ENCODE measurements at regions of chr6 and their contacts with region 1.

Region 1: DNA sequence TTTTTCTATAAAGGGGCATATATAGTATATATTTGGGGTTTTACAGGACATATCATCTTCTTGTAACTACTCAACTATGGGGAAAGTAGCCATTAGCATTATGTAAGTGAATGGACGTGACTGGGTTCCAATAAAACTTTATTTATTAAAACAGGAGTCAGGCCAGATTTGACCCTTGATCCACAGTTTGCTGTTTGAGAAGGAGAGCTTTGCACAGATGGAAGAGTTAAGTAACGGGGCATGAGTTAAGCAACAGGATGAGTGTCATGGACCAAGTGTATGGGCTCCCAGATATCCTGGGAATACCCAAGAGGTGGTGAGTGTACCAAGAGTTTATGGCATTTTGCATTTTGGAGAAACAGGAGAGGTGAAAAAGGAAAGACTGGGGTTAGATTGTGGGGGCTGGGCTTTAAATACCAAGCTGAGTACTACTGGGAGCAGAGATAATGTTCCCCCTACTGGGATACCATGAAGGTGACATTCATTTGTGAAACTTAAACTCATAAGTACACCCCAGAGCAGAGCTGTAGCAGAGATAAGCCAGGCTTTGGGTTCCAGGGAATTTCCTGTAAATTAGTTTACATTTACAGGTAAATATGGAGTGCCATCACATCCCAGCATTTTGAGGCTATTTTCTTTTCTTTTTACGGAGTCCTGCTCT is 18.5 kb upstream of the SCUBE3 start:
- DNase-seq: no peak
- H3K4me3 ChIP-seq: no peak overlapping the region
- H3K27ac ChIP-seq: no peak overlapping the region
- H3K4me1 ChIP-seq: peaks cover 0 to 10% (median 2%) of the 10 kb centered on the region in 4 experiments; a peak in 3 of 7 replicates
- H3K27me3 ChIP-seq: no peaks in the 10 kb centered on the region; a peak in 2 of 7 replicates
- CTCF ChIP-seq: no peak
- EP300 ChIP-seq: no peak
- POLR2A ChIP-seq: no peak
- RAD21 ChIP-seq: 0 out of 4 replicates have a peak, but pooled peaks of 1 of the 2 experiments have one; percentile 1

Region 2: DNA sequence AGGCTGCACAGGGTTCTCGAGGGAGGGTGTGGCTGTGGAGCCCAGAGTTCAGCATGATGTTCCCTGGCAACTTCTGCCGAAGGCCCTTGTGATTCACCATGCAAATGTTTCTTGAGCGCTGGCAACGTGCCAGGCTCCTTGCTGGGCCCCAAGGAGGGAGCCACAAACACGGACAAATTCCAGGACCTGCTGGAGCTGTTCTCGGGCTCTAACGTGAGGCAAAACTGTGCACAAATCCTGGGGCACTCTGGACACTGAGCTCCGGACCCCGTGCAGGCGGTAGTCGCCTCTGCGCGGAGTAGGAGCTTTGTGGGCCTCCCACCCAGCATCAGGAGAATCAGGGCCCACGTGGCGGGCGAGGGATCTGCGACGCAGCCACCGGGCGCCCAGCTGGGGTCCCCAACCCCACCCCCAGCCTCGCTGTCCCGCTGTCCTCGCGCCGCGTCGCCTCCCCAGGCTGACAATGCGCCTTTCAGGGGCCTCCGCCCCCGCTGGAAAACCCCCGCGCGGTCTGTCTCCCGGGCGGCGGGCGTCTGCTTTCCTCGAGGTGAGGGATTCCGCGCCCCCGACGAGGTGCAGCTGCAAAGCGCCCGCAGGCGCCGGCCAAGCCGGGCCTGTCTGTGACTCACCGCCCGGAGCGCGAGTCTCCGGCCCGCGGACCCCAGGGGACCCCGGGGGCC is 13.2 kb before region 1 on chr6:
- CTCF ChIA-PET with region 1: interaction called, 14 read pairs
- POLR2A ChIA-PET with region 1: no interaction called
- DNase-seq: peak in 1 of 2 experiments; percentile 64
- H3K4me3 ChIP-seq: peak overlapping the region in 1 of 4 experiments; percentile 46; a peak in 3 of 8 replicates
- H3K27ac ChIP-seq: no peak overlapping the region
- H3K4me1 ChIP-seq: peaks cover 0 to 5% (median 4%) of the 10 kb centered on the region in 4 experiments; a peak in 5 of 7 replicates
- H3K27me3 ChIP-seq: peaks cover 0 to 14% (median 4%) of the 10 kb centered on the region in 4 experiments; a peak in 4 of 7 replicates
- CTCF ChIP-seq: no peak
- EP300 ChIP-seq: no peak
- POLR2A ChIP-seq: no peak
- RAD21 ChIP-seq: no peak